ENCODE measurements at regions of chr5 and their contacts with region 1.

Region 1: DNA sequence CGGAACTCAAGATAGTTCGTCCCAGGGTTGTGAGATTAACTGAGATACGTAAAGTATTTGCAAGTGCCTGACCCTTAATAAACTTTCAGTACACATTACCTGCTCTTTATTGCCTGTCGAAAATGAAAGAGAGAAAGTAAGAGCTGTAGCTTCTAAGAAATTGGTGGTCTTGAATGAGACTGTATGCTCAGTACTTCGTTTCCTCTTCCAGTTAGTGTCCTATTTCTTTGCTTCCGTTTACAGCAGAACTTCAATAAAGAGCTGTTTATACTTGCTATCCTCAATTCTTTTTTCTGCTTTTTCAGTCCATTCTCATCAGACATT is 534 bp downstream of the SRFBP1 start:
- DNase-seq: no peak
- H3K4me3 ChIP-seq: peak overlapping the region; percentile 88 to 97
- H3K27ac ChIP-seq: peak overlapping the region; percentile 74 to 77
- H3K4me1 ChIP-seq: peaks cover 5 to 19% (median 13%) of the 10 kb centered on the region in 4 donors
- H3K27me3 ChIP-seq: no peaks in the 10 kb centered on the region
- CTCF ChIP-seq: no peak

Region 2: DNA sequence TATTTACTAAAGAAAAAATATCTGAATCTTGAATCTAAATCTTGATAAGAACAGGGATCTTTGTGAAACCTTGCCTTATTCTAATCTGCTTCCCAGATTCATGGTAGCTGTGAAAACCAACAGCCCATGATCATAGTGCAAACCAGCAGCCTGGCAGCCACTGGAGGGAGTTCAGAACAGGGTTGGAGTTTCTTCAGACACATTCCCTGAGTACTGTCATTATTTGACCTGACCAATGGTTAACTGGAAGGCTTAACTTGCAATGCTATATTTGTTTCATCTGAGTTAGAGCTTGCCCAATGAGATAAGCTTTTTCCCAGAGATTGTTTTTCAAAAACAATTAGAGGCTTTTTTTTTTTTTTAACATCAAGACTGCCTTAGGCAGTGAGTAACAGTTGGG is 67.9 kb after region 1 on chr5:
- intact Hi-C with region 1: no loop called
- DNase-seq: no peak
- H3K4me3 ChIP-seq: no peak overlapping the region
- H3K27ac ChIP-seq: no peak overlapping the region
- H3K4me1 ChIP-seq: no peaks in the 10 kb centered on the region
- H3K27me3 ChIP-seq: no peaks in the 10 kb centered on the region
- CTCF ChIP-seq: no peak

Region 3: DNA sequence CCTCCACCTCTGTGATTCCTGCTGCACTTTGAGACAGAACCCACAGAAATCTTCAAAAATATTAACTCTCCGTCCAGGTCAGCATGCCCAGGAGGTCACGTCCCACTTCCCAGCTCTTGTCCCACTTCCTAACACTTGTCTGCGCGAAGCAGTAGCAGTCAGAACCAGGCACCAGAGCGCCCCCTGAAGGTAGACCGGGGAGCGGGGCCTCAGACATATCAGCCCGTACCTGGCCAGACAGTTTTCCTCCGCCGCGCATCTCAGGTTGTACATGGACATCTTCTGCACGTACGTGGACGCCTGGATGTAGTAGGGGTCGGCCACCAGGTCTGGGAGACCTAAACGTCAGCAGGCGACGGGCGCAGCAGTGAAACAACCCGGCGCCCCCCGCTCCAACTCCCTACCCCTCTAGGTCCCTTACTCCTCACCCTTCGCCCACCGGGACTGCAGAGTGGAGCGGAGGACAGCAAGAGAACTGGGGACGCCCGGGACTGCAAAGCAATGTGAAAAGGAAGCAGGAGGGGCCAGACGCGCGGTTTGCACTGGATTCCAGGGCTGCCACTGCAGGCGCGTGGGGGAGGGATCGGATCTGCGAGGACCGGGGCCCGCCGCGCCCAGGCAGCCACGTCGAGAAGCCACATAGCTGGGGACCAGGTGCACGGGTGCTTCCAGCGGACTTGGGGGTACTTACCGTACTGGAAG is 114.5 kb after region 1 on chr5:
- intact Hi-C with region 1: loop called (anchors 5 kb)
- DNase-seq: peak; percentile 88 to 91
- H3K4me3 ChIP-seq: peak overlapping the region; percentile 73 to 74
- H3K27ac ChIP-seq: peak overlapping the region; percentile 76 to 89
- H3K4me1 ChIP-seq: peaks cover 0 to 37% (median 10%) of the 10 kb centered on the region in 4 donors
- H3K27me3 ChIP-seq: no peaks in the 10 kb centered on the region
- CTCF ChIP-seq: peak; percentile 63 to 79

Measured in tibial artery (tissue), 4 donors.